ENCODE measurements at regions of chr6 and their contacts with region 1.

Region 1: GRCh38 chr6:88492824-88493223 is 326.7 kb upstream of the CNR1 start:
- DNase-seq: no peak
- ATAC-seq: no peak
- H3K4me3 ChIP-seq: no peak overlapping the region
- H3K27ac ChIP-seq: peak overlapping the region; percentile 91
- H3K4me1 ChIP-seq: peaks cover 16% of the 10 kb centered on the region
- H3K27me3 ChIP-seq: no peaks in the 10 kb centered on the region
- CTCF ChIP-seq: peak; percentile 10 to 27 (median 15); a peak in 2 of 6 replicates
- EP300 ChIP-seq: no peak
- POLR2A ChIP-seq: no peak
- RAD21 ChIP-seq: peak; percentile 52

Region 2: GRCh38 chr6:88238065-88238464 is 254.8 kb before region 1 on chr6:
- CTCF ChIA-PET with region 1: interaction called, 5 read pairs
- POLR2A ChIA-PET with region 1: interaction called, 3 read pairs
- RAD21 ChIA-PET with region 1: no interaction called
- SMC1A ChIA-PET with region 1: interaction called, 16 read pairs
- in situ Hi-C with region 1: no loop called
- intact Hi-C with region 1: loop called (anchors 5 kb)
- DNase-seq: peak; percentile 33
- ATAC-seq: peak; percentile 92
- H3K4me3 ChIP-seq: no peak overlapping the region
- H3K27ac ChIP-seq: no peak overlapping the region
- H3K4me1 ChIP-seq: peaks cover 3% of the 10 kb centered on the region; the same call in 1 of the 2 replicates
- H3K27me3 ChIP-seq: no peaks in the 10 kb centered on the region
- CTCF ChIP-seq: peak; percentile 64 to 77 (median 66); a peak in 5 of 6 replicates
- EP300 ChIP-seq: no peak
- POLR2A ChIP-seq: no peak
- RAD21 ChIP-seq: peak; percentile 97

Region 3: DNA sequence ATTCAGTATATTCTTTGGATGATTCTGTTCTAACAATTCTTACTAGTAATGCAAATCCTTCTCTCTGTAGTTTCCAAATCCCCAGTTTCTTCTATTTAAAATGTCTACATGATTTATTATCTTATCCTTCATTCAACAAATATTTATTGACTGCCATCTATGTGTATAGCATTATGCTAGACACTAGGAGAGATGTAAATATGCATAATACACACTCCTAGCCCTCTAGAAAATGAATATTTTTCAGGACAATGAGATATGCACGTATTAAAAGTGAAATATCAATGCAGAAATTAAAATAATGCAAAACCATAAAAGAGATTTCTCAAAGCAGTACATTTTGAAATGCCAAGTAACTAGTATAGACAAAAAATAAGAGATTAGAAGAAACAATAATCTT is 33.2 kb before region 1 on chr6:
- CTCF ChIA-PET with region 1: no interaction called
- POLR2A ChIA-PET with region 1: no interaction called
- RAD21 ChIA-PET with region 1: no interaction called
- SMC1A ChIA-PET with region 1: no interaction called
- in situ Hi-C with region 1: no loop called
- intact Hi-C with region 1: no loop called
- DNase-seq: no peak
- ATAC-seq: no peak
- H3K4me3 ChIP-seq: no peak overlapping the region
- H3K27ac ChIP-seq: no peak overlapping the region
- H3K4me1 ChIP-seq: no peaks in the 10 kb centered on the region
- H3K27me3 ChIP-seq: no peaks in the 10 kb centered on the region
- CTCF ChIP-seq: no peak
- EP300 ChIP-seq: no peak
- POLR2A ChIP-seq: no peak
- RAD21 ChIP-seq: no peak

Region 4: DNA sequence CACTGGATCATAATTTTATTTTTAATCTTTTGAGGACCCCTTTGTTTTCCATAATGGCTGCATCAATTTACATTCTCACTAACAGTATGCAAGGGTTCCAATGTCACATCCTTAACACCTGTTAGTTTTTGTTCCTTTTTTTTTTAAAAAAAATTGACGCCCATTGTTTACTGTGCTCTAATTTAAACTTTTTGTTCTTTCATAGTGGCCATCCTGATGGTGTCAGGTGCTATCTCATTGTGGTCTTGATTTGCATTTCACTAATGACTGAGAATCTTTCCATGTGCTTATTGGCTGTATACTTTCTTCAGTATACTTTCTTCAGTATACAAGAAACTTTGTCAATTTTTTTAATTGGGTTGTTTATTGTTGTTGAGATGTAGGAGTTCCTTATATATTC is 123.6 kb after region 1 on chr6:
- CTCF ChIA-PET with region 1: interaction called, 3 read pairs
- POLR2A ChIA-PET with region 1: no interaction called
- RAD21 ChIA-PET with region 1: interaction called, 4 read pairs
- SMC1A ChIA-PET with region 1: interaction called, 31 read pairs
- in situ Hi-C with region 1: no loop called
- intact Hi-C with region 1: no loop called
- DNase-seq: no peak
- ATAC-seq: peak; percentile 78
- H3K4me3 ChIP-seq: peak overlapping the region; percentile 9; the same call in 1 of the 2 replicates
- H3K27ac ChIP-seq: peak overlapping the region; percentile 62
- H3K4me1 ChIP-seq: peaks cover 15% of the 10 kb centered on the region; the same call in 1 of the 2 replicates
- H3K27me3 ChIP-seq: no peaks in the 10 kb centered on the region
- CTCF ChIP-seq: no peak
- EP300 ChIP-seq: peak; percentile 44 to 90; a peak in 3 of 4 replicates
- POLR2A ChIP-seq: no peak
- RAD21 ChIP-seq: no peak

Region 5: DNA sequence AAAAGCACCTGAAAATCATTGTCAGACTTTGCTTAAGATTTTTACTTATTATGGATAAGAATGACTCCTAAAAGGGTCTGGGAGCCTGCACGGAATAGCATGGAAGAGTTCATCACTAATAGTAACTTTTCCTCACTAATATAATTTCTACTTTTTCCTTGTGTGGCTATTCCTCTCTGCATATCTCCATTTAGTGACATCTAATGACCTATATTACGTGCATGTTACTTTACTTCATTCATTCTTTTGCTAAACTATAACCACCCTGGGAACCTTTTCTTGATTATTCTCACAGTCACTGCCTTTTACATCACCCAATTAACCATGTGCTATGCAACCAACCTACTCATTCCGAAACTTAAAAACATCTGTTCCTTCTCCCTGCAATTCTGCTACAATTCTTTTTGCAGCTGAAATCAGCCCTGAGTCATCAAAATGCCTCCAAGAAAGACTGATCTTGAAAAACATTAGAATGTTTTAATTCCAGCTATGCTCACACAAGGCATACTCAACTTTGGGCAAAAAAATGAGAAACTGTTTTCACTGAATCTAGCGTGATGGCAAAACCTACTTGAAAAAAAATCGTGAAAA is 157.3 kb after region 1 on chr6:
- CTCF ChIA-PET with region 1: interaction called, 6 read pairs
- POLR2A ChIA-PET with region 1: interaction called, 7 read pairs
- RAD21 ChIA-PET with region 1: interaction called, 22 read pairs
- SMC1A ChIA-PET with region 1: interaction called, 24 read pairs
- in situ Hi-C with region 1: no loop called
- intact Hi-C with region 1: loop called (anchors 2 kb)
- DNase-seq: peak; percentile 97
- ATAC-seq: peak; percentile 94
- H3K4me3 ChIP-seq: no peak overlapping the region
- H3K27ac ChIP-seq: peak overlapping the region; percentile 83
- H3K4me1 ChIP-seq: peaks cover 11% of the 10 kb centered on the region
- H3K27me3 ChIP-seq: no peaks in the 10 kb centered on the region
- CTCF ChIP-seq: no peak
- EP300 ChIP-seq: peak in 1 of 2 experiments; percentile 94
- POLR2A ChIP-seq: no peak
- RAD21 ChIP-seq: peak; percentile 41

Region 6: GRCh38 chr6:88761237-88762031 is 268.6 kb after region 1 on chr6:
- CTCF ChIA-PET with region 1: interaction called, 28 read pairs
- POLR2A ChIA-PET with region 1: interaction called, 7 read pairs
- RAD21 ChIA-PET with region 1: interaction called, 56 read pairs
- SMC1A ChIA-PET with region 1: interaction called, 48 read pairs
- in situ Hi-C with region 1: no loop called
- intact Hi-C with region 1: loop called (anchors 5 kb)
- DNase-seq: peak; percentile 77
- ATAC-seq: peak; percentile 80
- H3K4me3 ChIP-seq: no peak overlapping the region
- H3K27ac ChIP-seq: peak overlapping the region; percentile 94
- H3K4me1 ChIP-seq: peaks cover 13% of the 10 kb centered on the region
- H3K27me3 ChIP-seq: no peaks in the 10 kb centered on the region
- CTCF ChIP-seq: peak; percentile 26 to 42 (median 37); a peak in 4 of 6 replicates
- EP300 ChIP-seq: peak; percentile 56 to 67; a peak in 2 of 4 replicates
- POLR2A ChIP-seq: no peak
- RAD21 ChIP-seq: peak; percentile 71